OCI-LY7 (cell line): ENCODE measurements at regions of chr17 and their contacts with region 1.

Region 1: GRCh38 chr17:28335201-28335955 is at the starts of genes IFT20 and TNFAIP1:
- DNase-seq: peak; percentile 99
- H3K4me3 ChIP-seq: peak within 1 kb of the TSS; percentile 86
- H3K27ac ChIP-seq: no peak within 1 kb of the TSS
- H3K4me1 ChIP-seq: peaks cover 23% of the 10 kb centered on the region
- CTCF ChIP-seq: no peak
- total RNA-seq, gene IFT20: 16.3 and 32.9 TPM in 2 replicates
- total RNA-seq, gene TNFAIP1: 9.3 and 15.5 TPM in 2 replicates

Region 2: DNA sequence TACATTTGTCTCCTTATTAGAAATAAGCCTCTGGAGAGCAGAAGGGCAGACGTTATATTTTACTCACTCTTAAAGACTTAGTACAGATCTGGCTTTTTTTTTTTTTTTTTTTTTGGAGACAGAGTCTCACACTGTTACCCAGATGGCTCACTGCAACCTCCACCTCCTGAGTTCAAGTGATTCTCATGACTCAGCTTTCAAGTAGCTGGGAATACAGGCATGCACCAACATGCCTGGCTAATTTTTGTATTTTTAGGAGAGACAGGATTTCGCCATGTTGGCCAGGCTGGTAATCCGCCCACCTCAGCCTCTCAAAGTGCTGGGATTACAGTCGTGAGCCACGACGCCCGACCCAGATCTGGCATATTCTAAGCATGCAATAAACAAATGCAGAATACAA is 52.8 kb before region 1 on chr17:
- CTCF ChIA-PET with region 1: no interaction called
- POLR2A ChIA-PET with region 1: no interaction called
- intact Hi-C with region 1: no loop called
- DNase-seq: no peak
- H3K4me3 ChIP-seq: no peak overlapping the region
- H3K27ac ChIP-seq: no peak overlapping the region
- H3K4me1 ChIP-seq: no peaks in the 10 kb centered on the region
- CTCF ChIP-seq: no peak

Region 3: GRCh38 chr17:28318759-28319660 is 16.4 kb before region 1 on chr17 and contains the start of gene TMEM97:
- CTCF ChIA-PET with region 1: interaction called, 3 read pairs
- POLR2A ChIA-PET with region 1: interaction called, 20 read pairs
- intact Hi-C with region 1: no loop called
- DNase-seq: peak; percentile 98
- H3K4me3 ChIP-seq: peak within 1 kb of the TSS; percentile 89
- H3K27ac ChIP-seq: peak within 1 kb of the TSS; percentile 49
- H3K4me1 ChIP-seq: peaks cover 29% of the 10 kb centered on the region
- CTCF ChIP-seq: 0 out of 2 replicates have a peak, but pooled peaks have one; percentile 30
- total RNA-seq, gene TMEM97: 62.3 and 65.7 TPM in 2 replicates

Region 4: DNA sequence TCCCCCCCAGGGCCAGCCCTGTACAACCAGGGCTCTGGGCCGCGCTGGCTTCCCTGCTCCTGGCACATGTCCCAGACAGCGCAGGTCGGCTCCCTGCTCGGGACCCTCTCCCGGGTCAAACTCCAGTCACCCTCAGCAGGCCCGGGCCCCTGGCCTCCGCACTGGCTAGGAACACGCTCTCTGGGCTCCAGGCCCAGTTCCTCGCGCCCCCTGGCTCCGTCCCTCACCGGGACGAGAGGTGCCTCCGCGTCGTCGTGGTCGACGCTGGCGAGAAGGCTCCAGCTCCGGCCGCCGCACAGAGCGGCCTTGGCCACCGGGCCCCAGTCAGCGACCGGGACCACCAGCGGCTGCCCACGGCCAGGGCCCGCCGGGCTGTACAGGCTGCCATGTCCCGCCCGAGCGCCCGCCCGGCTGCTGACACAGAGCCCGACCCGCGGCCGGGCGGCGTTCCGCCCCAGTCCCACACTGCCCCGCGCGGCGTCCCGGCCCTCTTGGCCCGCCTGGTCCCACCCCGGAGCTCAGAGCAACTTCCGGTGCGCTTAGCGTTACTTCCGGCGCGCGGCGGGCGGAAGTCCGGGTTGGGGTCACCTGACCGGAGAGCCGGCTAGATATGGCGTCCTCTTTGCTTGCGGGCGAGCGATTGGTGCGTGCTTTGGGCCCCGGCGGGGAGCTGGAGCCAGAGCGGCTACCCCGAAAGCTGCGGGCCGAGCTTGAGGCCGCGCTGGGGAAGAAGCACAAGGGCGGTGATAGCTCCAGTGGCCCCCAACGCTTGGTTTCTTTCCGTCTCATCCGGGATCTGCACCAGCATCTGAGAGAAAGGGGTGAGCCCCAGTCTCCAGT is 21.9 kb after region 1 on chr17 and contains the start of gene POLDIP2:
- CTCF ChIA-PET with region 1: interaction called, 3 read pairs
- POLR2A ChIA-PET with region 1: interaction called, 22 read pairs
- intact Hi-C with region 1: loop called (anchors 1 kb)
- DNase-seq: peak; percentile 96
- H3K4me3 ChIP-seq: peak within 1 kb of the TSS; percentile 89
- H3K27ac ChIP-seq: peak within 1 kb of the TSS; percentile 32
- H3K4me1 ChIP-seq: peaks cover 21% of the 10 kb centered on the region
- CTCF ChIP-seq: 0 out of 2 replicates have a peak, but pooled peaks have one; percentile 18
- total RNA-seq, gene POLDIP2: 82.2 and 88.8 TPM in 2 replicates

Region 5: GRCh38 chr17:28371245-28372202 is 36.1 kb after region 1 on chr17 and contains the start of gene SARM1:
- CTCF ChIA-PET with region 1: no interaction called
- POLR2A ChIA-PET with region 1: no interaction called
- intact Hi-C with region 1: loop called (anchors 2 kb)
- DNase-seq: peak; percentile 91
- H3K4me3 ChIP-seq: peak within 1 kb of the TSS; percentile 80
- H3K27ac ChIP-seq: peak within 1 kb of the TSS; percentile 32
- H3K4me1 ChIP-seq: peaks cover 20% of the 10 kb centered on the region
- CTCF ChIP-seq: no peak
- total RNA-seq, gene SARM1: 4.7 and 7.5 TPM in 2 replicates